T-cell (primary cell): ENCODE measurements at regions of chr3 and their contacts with region 1.

Region 1: DNA sequence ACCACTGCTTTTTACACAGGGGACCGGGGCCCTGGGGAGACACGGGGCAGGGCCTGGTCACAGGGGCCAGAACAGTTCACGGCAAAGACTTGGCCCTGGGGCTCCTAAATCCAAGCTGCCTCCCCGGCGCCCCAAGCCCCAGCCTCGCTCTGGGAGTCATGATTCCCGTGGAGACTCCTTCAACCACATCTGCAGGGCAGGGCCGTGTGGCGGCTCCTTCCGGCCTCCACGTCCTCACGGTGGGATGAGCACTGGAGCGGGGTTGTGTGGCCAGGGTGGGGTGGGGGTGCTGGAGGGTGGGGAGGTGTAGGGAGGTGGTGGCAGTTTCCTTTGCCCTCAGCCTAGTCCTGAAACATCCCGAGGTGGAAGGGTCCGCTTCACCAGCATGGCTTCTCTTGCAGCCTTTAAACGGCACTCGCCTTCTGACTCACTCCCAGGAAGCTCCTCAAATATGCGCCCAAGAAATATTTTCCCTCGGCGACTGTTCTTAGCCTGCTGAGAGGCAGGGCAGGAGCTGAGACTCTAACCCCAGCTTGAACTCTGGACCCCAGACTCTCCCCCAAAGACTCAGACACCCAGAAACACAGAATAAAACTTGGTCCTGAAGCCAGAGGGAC is 1.8 kb downstream of the MUC4 start:
- DNase-seq: no peak
- ATAC-seq: no peak
- H3K4me3 ChIP-seq: no peak overlapping the region
- H3K4me3 Mint-ChIP-seq: no peak overlapping the region
- H3K27ac ChIP-seq: no peak overlapping the region
- H3K27ac Mint-ChIP-seq: no peak overlapping the region
- H3K4me1 ChIP-seq: peaks cover 5 to 12% of the 10 kb centered on the region in 2 experiments
- H3K4me1 Mint-ChIP-seq: peaks cover 12 to 18% (median 17%) of the 10 kb centered on the region in 3 donors
- H3K27me3 ChIP-seq: peaks cover 0 to 30% of the 10 kb centered on the region in 2 experiments
- H3K27me3 Mint-ChIP-seq: peaks cover 4 to 14% of the 10 kb centered on the region in 2 donors

Region 2: GRCh38 chr3:195768831-195769303 is 41.1 kb before region 1 on chr3:
- CTCF ChIA-PET with region 1: no interaction called
- POLR2A ChIA-PET with region 1: no interaction called
- DNase-seq: no peak
- ATAC-seq: no peak
- H3K4me3 ChIP-seq: no peak overlapping the region
- H3K4me3 Mint-ChIP-seq: no peak overlapping the region
- H3K27ac ChIP-seq: no peak overlapping the region
- H3K27ac Mint-ChIP-seq: no peak overlapping the region
- H3K4me1 ChIP-seq: no peaks in the 10 kb centered on the region
- H3K4me1 Mint-ChIP-seq: no peaks in the 10 kb centered on the region
- H3K27me3 ChIP-seq: peaks cover 0 to 14% of the 10 kb centered on the region in 2 experiments
- H3K27me3 Mint-ChIP-seq: peaks cover 6 to 8% of the 10 kb centered on the region in 2 donors

Region 3: GRCh38 chr3:196063456-196063855 is 253.5 kb after region 1 on chr3:
- CTCF ChIA-PET with region 1: no interaction called
- POLR2A ChIA-PET with region 1: interaction called in 1 of 2 experiments, 12 read pairs
- DNase-seq: no peak
- ATAC-seq: no peak
- H3K4me3 ChIP-seq: no peak overlapping the region
- H3K4me3 Mint-ChIP-seq: no peak overlapping the region
- H3K27ac ChIP-seq: no peak overlapping the region
- H3K27ac Mint-ChIP-seq: peak overlapping the region in 1 of 2 donors; percentile 36
- H3K4me1 ChIP-seq: no peaks in the 10 kb centered on the region
- H3K4me1 Mint-ChIP-seq: no peaks in the 10 kb centered on the region
- H3K27me3 ChIP-seq: no peaks in the 10 kb centered on the region
- H3K27me3 Mint-ChIP-seq: no peaks in the 10 kb centered on the region

Region 4: GRCh38 chr3:197454014-197454413 is 1644.1 kb after region 1 on chr3:
- CTCF ChIA-PET with region 1: no interaction called
- POLR2A ChIA-PET with region 1: no interaction called
- DNase-seq: peak in 2 of 35 experiments; percentile 8 to 48
- ATAC-seq: peak; percentile 45 to 74 (median 48)
- H3K4me3 ChIP-seq: no peak overlapping the region
- H3K4me3 Mint-ChIP-seq: peak overlapping the region in 2 of 3 donors; percentile 0 to 18
- H3K27ac ChIP-seq: no peak overlapping the region
- H3K27ac Mint-ChIP-seq: no peak overlapping the region
- H3K4me1 ChIP-seq: peaks cover 10 to 32% of the 10 kb centered on the region in 2 experiments
- H3K4me1 Mint-ChIP-seq: peaks cover 16 to 23% (median 20%) of the 10 kb centered on the region in 3 donors
- H3K27me3 ChIP-seq: peaks cover 0 to 18% of the 10 kb centered on the region in 2 experiments
- H3K27me3 Mint-ChIP-seq: peaks cover 0 to 1% of the 10 kb centered on the region in 2 donors